GM12878 (cell line): ENCODE measurements at regions of chr7 and their contacts with region 1.

Region 1: DNA sequence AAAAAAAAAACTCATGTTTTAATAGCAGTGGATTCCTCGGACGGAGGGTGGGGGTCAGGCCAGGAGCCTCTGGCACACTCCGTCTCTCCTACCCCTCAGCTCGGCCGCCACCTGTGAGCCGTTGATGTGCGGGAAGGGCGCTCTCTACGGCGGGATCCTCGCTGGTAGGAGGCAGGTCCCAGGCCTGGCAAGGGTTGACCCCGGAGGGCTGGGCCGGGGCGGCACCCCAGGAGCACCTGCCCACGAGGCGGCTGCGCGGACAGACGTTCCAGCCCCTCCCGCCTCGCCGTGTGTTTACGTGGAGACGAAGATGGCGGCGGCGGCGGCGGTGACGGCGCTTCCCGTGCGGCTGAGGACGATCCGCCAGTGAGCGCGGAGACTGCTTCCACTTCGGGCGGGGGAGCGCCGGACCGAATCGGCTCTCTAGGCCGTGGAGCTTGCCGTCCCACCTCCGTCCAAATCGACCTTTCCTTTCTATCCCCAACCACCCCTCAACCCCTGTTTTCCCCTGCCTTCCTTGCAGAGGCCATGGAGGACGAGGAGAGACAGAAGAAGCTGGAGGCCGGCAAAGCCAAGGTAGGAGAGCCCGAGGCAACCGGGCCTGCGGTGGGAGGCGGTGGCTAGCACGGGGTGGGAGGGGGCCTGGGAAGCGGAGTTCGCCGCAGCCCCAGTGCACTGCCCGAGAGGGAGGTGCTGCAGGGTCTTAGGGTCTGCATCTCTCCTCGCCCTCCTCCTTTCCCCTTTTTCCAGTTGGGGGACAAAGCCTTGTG is at the start of gene AKAP9:
- DNase-seq: peak; percentile 44
- ATAC-seq: peak; percentile 96
- H3K4me3 ChIP-seq: peak within 1 kb of the TSS; percentile 98
- H3K27ac ChIP-seq: peak within 1 kb of the TSS; percentile 84
- H3K4me1 ChIP-seq: peaks cover 5% of the 10 kb centered on the region; the same call in 1 of the 2 replicates
- H3K27me3 ChIP-seq: no peaks in the 10 kb centered on the region
- CTCF ChIP-seq: no peak
- EP300 ChIP-seq: no peak
- POLR2A ChIP-seq: peak; percentile 88; the same call in 1 of the 2 replicates
- RAD21 ChIP-seq: no peak
- polyA plus RNA-seq, gene AKAP9: 21.1 to 42.8 TPM

Region 2: DNA sequence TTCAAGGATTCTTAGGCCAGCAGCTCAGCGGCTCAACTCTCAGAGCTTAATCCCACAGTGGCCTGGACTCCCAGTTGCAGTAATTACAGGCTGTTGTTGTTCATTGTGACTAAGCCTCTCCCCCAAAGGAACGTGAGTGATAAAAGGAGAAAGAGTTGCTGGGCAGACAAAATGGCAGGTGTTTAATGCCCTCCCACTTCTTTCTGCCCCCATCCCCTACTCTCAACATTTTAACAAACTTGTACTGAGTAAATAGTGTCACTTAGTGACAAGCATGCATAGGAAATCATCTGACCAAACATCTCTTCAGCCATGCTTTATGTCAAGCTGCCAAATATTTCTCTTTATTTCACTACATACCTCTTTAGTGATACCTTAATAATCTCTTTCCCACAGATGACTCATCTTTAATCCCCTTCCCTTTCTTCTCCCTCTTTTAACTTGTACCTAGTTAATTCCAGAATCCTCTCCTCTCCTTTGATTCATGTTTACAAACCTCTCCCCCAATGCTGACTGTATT is 47.9 kb before region 1 on chr7:
- CTCF ChIA-PET with region 1: no interaction called
- POLR2A ChIA-PET with region 1: no interaction called
- RAD21 ChIA-PET with region 1: no interaction called
- SMC1A ChIA-PET with region 1: no interaction called
- in situ Hi-C with region 1: no loop called
- intact Hi-C with region 1: loop called (anchors 1 kb)
- DNase-seq: no peak
- ATAC-seq: no peak
- H3K4me3 ChIP-seq: no peak overlapping the region
- H3K27ac ChIP-seq: no peak overlapping the region
- H3K4me1 ChIP-seq: no peaks in the 10 kb centered on the region
- H3K27me3 ChIP-seq: no peaks in the 10 kb centered on the region
- CTCF ChIP-seq: no peak
- EP300 ChIP-seq: no peak
- POLR2A ChIP-seq: no peak
- RAD21 ChIP-seq: no peak

Region 3: DNA sequence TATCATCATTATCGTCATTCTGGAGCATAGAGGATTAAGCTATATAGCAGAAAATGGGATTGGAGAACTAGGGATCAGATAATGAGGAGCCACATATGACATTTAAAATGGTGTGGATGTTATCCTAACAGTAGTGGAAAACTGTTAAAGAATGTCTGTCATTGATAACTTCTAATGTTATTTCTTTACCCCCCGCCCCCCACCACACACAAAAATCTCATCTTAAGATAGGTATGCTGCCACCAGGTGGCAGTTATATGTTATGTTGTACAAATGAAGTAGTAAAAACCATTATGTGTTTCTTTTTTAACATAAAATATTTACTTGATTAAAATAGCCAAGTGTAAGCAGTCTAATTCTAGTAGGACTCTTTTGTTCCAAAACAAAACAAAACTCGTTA is 12.9 kb after region 1 on chr7:
- CTCF ChIA-PET with region 1: interaction called, 54 read pairs
- POLR2A ChIA-PET with region 1: interaction called, 5 read pairs
- RAD21 ChIA-PET with region 1: interaction called, 3 read pairs
- SMC1A ChIA-PET with region 1: interaction called, 14 read pairs
- in situ Hi-C with region 1: no loop called
- intact Hi-C with region 1: no loop called
- DNase-seq: no peak
- ATAC-seq: 0 out of 3 replicates have a peak, but pooled peaks have one; percentile 25
- H3K4me3 ChIP-seq: no peak overlapping the region
- H3K27ac ChIP-seq: no peak overlapping the region
- H3K4me1 ChIP-seq: peaks cover 4% of the 10 kb centered on the region
- H3K27me3 ChIP-seq: no peaks in the 10 kb centered on the region
- CTCF ChIP-seq: peak in 2 of 3 experiments; percentile 21 to 28; a peak in 2 of 6 replicates
- EP300 ChIP-seq: no peak
- POLR2A ChIP-seq: no peak
- RAD21 ChIP-seq: no peak

Region 4: GRCh38 chr7:92134271-92135051 is 193.7 kb after region 1 on chr7 and contains the start of gene CYP51A1:
- CTCF ChIA-PET with region 1: no interaction called
- POLR2A ChIA-PET with region 1: interaction called, 8 read pairs
- RAD21 ChIA-PET with region 1: interaction called, 4 read pairs
- SMC1A ChIA-PET with region 1: interaction called, 4 read pairs
- in situ Hi-C with region 1: no loop called
- intact Hi-C with region 1: loop called (anchors 5 kb)
- DNase-seq: peak; percentile 76
- ATAC-seq: peak; percentile 90
- H3K4me3 ChIP-seq: peak within 1 kb of the TSS; percentile 79
- H3K27ac ChIP-seq: peak within 1 kb of the TSS; percentile 99
- H3K4me1 ChIP-seq: peaks cover 3% of the 10 kb centered on the region; the same call in 1 of the 2 replicates
- H3K27me3 ChIP-seq: no peaks in the 10 kb centered on the region
- CTCF ChIP-seq: no peak; a peak in 1 of 6 replicates
- EP300 ChIP-seq: 0 out of 4 replicates have a peak, but pooled peaks of 1 of the 2 experiments have one; percentile 37
- POLR2A ChIP-seq: peak; percentile 87
- RAD21 ChIP-seq: no peak
- polyA plus RNA-seq, gene CYP51A1: 28.1 to 33.1 TPM

Region 5: DNA sequence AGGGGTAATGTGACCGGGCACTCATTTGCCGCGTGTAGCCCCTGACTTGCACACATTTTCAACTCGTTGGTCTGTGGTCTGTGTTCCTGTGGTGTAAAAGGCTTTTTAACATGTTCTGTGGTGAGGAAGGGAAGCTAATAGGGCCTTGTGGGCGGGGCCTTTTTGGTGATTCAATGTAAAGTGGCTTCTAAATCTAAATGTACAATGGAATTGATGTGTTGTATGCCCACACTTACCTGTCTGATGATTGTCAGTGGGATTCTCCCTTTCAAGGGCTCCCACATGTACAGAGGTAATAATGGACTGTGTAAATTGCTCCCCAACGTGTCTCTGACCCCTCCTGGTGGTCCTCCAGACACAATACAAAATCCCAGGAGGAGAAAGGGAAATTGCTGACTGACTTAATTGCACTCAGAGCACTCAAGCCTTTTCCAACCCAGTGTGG is 463.4 kb after region 1 on chr7:
- CTCF ChIA-PET with region 1: no interaction called
- POLR2A ChIA-PET with region 1: no interaction called
- RAD21 ChIA-PET with region 1: no interaction called
- SMC1A ChIA-PET with region 1: no interaction called
- in situ Hi-C with region 1: no loop called
- intact Hi-C with region 1: no loop called
- DNase-seq: no peak
- ATAC-seq: peak; percentile 37
- H3K4me3 ChIP-seq: no peak overlapping the region
- H3K27ac ChIP-seq: no peak overlapping the region
- H3K4me1 ChIP-seq: no peaks in the 10 kb centered on the region
- H3K27me3 ChIP-seq: no peaks in the 10 kb centered on the region
- CTCF ChIP-seq: no peak
- EP300 ChIP-seq: no peak
- POLR2A ChIP-seq: no peak
- RAD21 ChIP-seq: peak; percentile 34; the same call in 1 of the 2 replicates

Region 6: DNA sequence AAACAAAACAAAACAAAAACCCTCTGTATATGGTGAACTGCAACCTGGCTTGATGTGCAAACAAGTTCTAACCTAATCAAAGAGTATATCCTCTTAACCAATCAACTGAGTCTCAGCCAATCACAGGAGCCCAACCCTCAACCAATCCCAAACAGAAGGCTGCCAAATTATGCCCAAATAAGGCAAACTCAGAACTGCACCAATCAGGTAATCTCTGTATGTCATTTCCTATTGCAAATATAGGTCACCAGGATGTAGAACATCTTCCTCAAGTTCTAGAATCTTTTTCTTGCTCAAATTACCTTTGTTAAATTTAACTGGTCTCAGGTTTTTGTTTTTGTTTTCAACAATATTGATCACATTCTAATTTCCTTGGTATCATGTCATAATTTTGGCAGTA is 644.2 kb after region 1 on chr7:
- CTCF ChIA-PET with region 1: no interaction called
- POLR2A ChIA-PET with region 1: no interaction called
- RAD21 ChIA-PET with region 1: no interaction called
- SMC1A ChIA-PET with region 1: no interaction called
- in situ Hi-C with region 1: no loop called
- intact Hi-C with region 1: loop called (anchors 5 kb)
- DNase-seq: no peak
- ATAC-seq: peak; percentile 32
- H3K4me3 ChIP-seq: no peak overlapping the region
- H3K27ac ChIP-seq: peak overlapping the region; percentile 17; the same call in 1 of the 2 replicates
- H3K4me1 ChIP-seq: peaks cover 10% of the 10 kb centered on the region; the same call in 1 of the 2 replicates
- H3K27me3 ChIP-seq: no peaks in the 10 kb centered on the region
- CTCF ChIP-seq: no peak
- EP300 ChIP-seq: no peak
- POLR2A ChIP-seq: no peak
- RAD21 ChIP-seq: no peak